ENCODE measurements at regions of chr16 and their contacts with region 1.

Region 1: DNA sequence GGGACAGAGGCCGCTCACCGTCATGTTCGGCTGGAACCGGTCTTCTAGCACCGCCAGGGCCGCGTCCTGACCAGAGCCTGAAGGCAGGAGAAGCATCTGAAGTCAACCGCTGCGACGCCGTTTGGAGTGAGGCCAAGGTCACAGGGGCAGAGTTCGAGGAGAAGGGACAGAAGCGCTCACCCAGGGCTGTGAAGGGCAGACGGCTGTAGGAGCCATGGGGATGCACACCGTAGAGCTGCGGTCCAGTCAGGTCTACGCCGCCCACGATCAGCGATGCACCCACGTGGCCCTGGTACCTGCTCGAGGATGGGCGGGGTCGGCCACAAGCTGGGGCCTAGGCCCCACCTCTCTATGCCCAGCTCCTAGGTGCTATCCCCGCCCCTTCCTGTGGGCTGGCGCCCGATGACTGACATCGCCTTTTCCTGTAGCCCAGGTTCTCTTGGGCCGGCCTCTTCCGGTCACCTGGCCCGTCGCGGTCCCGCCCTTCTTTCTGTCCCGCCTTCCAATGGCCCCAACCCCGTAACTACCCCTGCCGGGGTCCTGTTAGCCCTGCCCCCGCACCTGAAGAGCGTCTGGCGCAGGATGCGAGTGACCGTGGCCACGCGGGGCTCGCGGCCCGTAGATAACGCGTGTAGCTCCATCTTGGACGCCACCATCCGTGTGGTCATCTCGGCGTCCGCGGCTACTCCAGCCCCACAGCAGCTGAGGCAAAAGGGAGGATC is 1.1 kb downstream of the PSMB10 start:
- DNase-seq: peak; percentile 95
- ATAC-seq: peak; percentile 89
- H3K4me3 ChIP-seq: peak overlapping the region; percentile 77 to 96 (median 93)
- H3K4me3 Mint-ChIP-seq: peak overlapping the region; percentile 100
- H3K27ac ChIP-seq: peak overlapping the region; percentile 67 to 85
- H3K27ac Mint-ChIP-seq: peak overlapping the region; percentile 99
- H3K4me1 ChIP-seq: peaks cover 25 to 38% of the 10 kb centered on the region in 2 donors
- H3K4me1 Mint-ChIP-seq: peaks cover 31% of the 10 kb centered on the region
- H3K27me3 ChIP-seq: no peaks in the 10 kb centered on the region
- H3K27me3 Mint-ChIP-seq: no peaks in the 10 kb centered on the region
- CTCF ChIP-seq: no peak

Region 2: GRCh38 chr16:67719048-67719777 is 216.3 kb before region 1 on chr16 and contains the start of gene GFOD2:
- CTCF ChIA-PET with region 1: no interaction called
- POLR2A ChIA-PET with region 1: no interaction called
- intact Hi-C with region 1: loop called (anchors 1 kb)
- DNase-seq: peak; percentile 97
- ATAC-seq: peak; percentile 94
- H3K4me3 ChIP-seq: peak within 1 kb of the TSS; percentile 66 to 93 (median 87)
- H3K4me3 Mint-ChIP-seq: peak within 1 kb of the TSS; percentile 99
- H3K27ac ChIP-seq: peak within 1 kb of the TSS; percentile 89 to 93
- H3K27ac Mint-ChIP-seq: peak within 1 kb of the TSS; percentile 98
- H3K4me1 ChIP-seq: peaks cover 18 to 20% of the 10 kb centered on the region in 2 donors
- H3K4me1 Mint-ChIP-seq: peaks cover 38% of the 10 kb centered on the region
- H3K27me3 ChIP-seq: no peaks in the 10 kb centered on the region
- H3K27me3 Mint-ChIP-seq: no peaks in the 10 kb centered on the region
- CTCF ChIP-seq: no peak
- total RNA-seq, gene GFOD2: 18.1 and 18.2 TPM in 2 replicates

Region 3: DNA sequence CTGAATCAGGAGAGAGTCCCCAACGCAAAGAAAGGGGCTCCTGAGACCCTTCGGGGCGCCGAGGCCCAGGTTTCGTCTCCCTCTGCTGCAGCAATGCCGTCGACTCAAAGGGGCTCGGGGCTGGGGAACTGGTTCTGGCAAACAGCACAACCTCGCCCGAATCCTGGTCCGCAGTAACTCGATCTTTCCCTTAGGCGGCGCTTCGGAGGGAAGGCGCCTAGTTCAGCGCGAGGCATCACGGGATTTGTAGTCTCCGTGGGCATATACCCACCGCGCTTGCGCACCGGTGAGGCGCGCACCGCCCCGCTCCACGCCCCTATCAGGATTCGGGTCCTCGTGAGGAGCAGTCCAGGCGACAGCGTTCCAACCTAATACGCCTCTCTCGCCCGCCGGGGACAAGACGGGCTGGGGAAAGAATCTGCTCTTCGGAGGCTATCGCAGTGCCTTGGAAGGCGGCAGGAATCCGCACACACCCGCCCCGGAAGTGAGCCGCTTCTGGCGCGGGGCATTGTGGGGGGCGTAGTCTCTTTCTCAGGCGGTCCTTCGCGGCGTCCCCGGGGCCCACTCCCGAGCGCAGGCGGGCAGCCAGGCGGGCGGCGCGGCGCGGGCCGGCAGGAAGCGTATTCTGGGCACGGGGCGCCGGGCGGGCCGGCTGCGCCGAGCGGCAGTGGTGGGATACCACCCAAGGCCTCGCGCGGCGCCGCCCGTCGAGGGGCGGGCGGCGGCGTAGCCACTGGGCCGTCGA is 93.6 kb before region 1 on chr16 and contains the start of gene THAP11:
- CTCF ChIA-PET with region 1: no interaction called
- POLR2A ChIA-PET with region 1: interaction called, 6 read pairs
- intact Hi-C with region 1: loop called (anchors 1 kb)
- DNase-seq: peak; percentile 98
- ATAC-seq: peak; percentile 58
- H3K4me3 ChIP-seq: peak within 1 kb of the TSS; percentile 74 to 98 (median 89)
- H3K4me3 Mint-ChIP-seq: peak within 1 kb of the TSS; percentile 96
- H3K27ac ChIP-seq: peak within 1 kb of the TSS; percentile 87 to 96
- H3K27ac Mint-ChIP-seq: peak within 1 kb of the TSS; percentile 98
- H3K4me1 ChIP-seq: peaks cover 31 to 42% of the 10 kb centered on the region in 2 donors
- H3K4me1 Mint-ChIP-seq: peaks cover 36% of the 10 kb centered on the region
- H3K27me3 ChIP-seq: no peaks in the 10 kb centered on the region
- H3K27me3 Mint-ChIP-seq: no peaks in the 10 kb centered on the region
- CTCF ChIP-seq: peak; percentile 83
- total RNA-seq, gene THAP11: 42.7 and 44.0 TPM in 2 replicates

Region 4: GRCh38 chr16:67892899-67893742 is 42.4 kb before region 1 on chr16 and contains the start of gene PSKH1:
- CTCF ChIA-PET with region 1: interaction called, 3 read pairs
- POLR2A ChIA-PET with region 1: interaction called, 19 read pairs
- intact Hi-C with region 1: loop called (anchors 1 kb)
- DNase-seq: peak; percentile 95
- ATAC-seq: peak; percentile 99
- H3K4me3 ChIP-seq: peak within 1 kb of the TSS; percentile 61 to 92 (median 76)
- H3K4me3 Mint-ChIP-seq: peak within 1 kb of the TSS; percentile 90
- H3K27ac ChIP-seq: peak within 1 kb of the TSS; percentile 77 to 95
- H3K27ac Mint-ChIP-seq: peak within 1 kb of the TSS; percentile 85
- H3K4me1 ChIP-seq: peaks cover 16 to 18% of the 10 kb centered on the region in 2 donors
- H3K4me1 Mint-ChIP-seq: peaks cover 31% of the 10 kb centered on the region
- H3K27me3 ChIP-seq: no peaks in the 10 kb centered on the region
- H3K27me3 Mint-ChIP-seq: no peaks in the 10 kb centered on the region
- CTCF ChIP-seq: no peak
- total RNA-seq, gene PSKH1: 29.1 TPM in 2 replicates

Region 5: GRCh38 chr16:67993189-67994039 is 57.9 kb after region 1 on chr16:
- CTCF ChIA-PET with region 1: interaction called, 4 read pairs
- POLR2A ChIA-PET with region 1: interaction called, 3 read pairs
- intact Hi-C with region 1: loop called (anchors 2 kb)
- DNase-seq: peak; percentile 92
- ATAC-seq: peak; percentile 87
- H3K4me3 ChIP-seq: peak overlapping the region; percentile 26 to 40 (median 31)
- H3K4me3 Mint-ChIP-seq: peak overlapping the region; percentile 82
- H3K27ac ChIP-seq: peak overlapping the region; percentile 86 to 89
- H3K27ac Mint-ChIP-seq: peak overlapping the region; percentile 99
- H3K4me1 ChIP-seq: peaks cover 49 to 60% of the 10 kb centered on the region in 2 donors
- H3K4me1 Mint-ChIP-seq: peaks cover 67% of the 10 kb centered on the region
- H3K27me3 ChIP-seq: no peaks in the 10 kb centered on the region
- H3K27me3 Mint-ChIP-seq: no peaks in the 10 kb centered on the region
- CTCF ChIP-seq: peak; percentile 96

Region 6: DNA sequence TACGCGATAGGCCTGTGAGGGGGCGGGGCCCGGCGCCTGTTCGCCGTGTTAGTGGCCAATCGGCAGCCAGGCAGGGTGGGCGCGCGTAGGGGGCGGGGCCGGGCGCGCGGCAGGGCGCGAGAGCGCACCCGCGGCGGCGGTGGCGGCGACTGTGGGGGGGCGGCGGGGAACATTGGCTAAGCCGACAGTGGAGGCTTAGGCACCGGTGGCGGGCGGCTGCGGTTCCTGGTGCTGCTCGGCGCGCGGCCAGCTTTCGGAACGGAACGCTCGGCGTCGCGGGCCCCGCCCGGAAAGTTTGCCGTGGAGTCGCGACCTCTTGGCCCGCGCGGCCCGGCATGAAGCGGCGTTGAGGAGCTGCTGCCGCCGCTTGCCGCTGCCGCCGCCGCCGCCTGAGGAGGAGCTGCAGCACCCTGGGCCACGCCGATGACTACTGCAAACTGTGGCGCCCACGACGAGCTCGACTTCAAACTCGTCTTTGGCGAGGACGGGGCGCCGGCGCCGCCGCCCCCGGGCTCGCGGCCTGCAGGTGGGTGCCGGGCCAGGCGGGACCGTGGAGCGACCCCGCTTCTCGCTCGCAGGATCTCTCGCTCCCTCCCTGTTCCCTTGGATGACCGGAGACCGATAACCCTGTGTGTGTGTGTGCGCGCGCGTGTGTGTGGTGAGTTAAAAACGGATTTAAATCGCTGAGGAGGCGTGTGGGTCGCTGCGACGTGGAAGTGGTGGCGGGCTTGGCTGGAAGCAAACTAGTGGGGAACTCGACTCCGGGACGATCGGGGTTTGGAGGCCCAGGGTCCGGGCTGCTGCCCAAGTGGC is 149.9 kb after region 1 on chr16 and contains the start of gene NFATC3:
- CTCF ChIA-PET with region 1: interaction called, 5 read pairs
- POLR2A ChIA-PET with region 1: interaction called, 5 read pairs
- intact Hi-C with region 1: loop called (anchors 1 kb)
- DNase-seq: peak; percentile 99
- ATAC-seq: peak; percentile 76
- H3K4me3 ChIP-seq: peak within 1 kb of the TSS; percentile 90 to 97 (median 94)
- H3K4me3 Mint-ChIP-seq: peak within 1 kb of the TSS; percentile 86
- H3K27ac ChIP-seq: peak within 1 kb of the TSS; percentile 81 to 93
- H3K27ac Mint-ChIP-seq: peak within 1 kb of the TSS; percentile 96
- H3K4me1 ChIP-seq: peaks cover 57 to 73% of the 10 kb centered on the region in 2 donors
- H3K4me1 Mint-ChIP-seq: peaks cover 68% of the 10 kb centered on the region
- H3K27me3 ChIP-seq: no peaks in the 10 kb centered on the region
- H3K27me3 Mint-ChIP-seq: no peaks in the 10 kb centered on the region
- CTCF ChIP-seq: no peak
- total RNA-seq, gene NFATC3: 115 TPM in 2 replicates